ENCODE measurements at regions of chr21 and their contacts with region 1.

Region 1: DNA sequence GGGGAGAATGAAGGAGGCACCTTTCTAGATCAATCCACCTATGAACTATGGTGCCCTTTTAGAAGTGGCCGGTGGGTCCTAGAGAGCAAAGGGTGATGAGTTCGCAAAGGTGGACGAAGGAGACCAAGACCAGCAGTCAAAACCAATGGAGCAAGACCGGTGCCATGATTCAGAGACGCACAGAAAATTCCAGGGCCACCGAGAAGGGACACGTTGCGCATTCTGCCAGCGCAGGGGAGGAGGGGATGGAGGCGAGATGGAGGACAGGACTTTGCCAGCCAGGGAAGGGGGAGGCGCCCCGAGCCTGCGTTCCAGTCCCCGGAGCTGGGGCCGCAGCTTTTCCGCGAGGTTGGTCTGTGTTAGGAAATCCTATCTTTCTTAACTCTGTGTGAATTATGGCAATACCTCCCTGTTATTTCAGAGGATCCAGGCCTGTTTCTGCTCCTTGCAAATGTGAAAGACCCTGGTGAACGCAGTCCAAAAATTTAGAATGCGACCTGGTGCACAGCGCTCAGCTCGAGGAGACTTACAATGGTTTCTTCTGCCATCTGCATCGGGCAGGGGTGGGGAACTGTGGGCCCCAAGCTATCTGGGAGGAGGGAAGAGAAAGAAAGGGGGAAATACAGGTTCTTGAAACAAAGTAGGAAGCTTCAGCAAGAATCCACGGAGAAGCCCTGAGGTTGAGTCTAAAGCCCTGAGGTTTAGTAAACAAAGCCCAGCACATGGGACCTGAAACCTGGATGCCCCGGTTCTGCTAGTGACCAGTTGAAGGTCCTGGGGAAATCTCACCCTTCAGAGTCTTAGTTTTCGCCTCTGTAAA is 129.4 kb downstream of the MRPS6 start:
- DNase-seq: peak in 1 of 2 donors; percentile 38
- ATAC-seq: peak in 4 of 8 donors; percentile 2 to 23 (median 12)
- H3K4me3 ChIP-seq: peak overlapping the region in 2 of 10 donors; percentile 26 to 54
- H3K27ac ChIP-seq: peak overlapping the region in 3 of 10 donors; percentile 9 to 64 (median 36)
- H3K4me1 ChIP-seq: peaks cover 0 to 72% (median 27%) of the 10 kb centered on the region in 9 donors
- H3K27me3 ChIP-seq: no peaks in the 10 kb centered on the region
- CTCF ChIP-seq: no peak

Region 2: DNA sequence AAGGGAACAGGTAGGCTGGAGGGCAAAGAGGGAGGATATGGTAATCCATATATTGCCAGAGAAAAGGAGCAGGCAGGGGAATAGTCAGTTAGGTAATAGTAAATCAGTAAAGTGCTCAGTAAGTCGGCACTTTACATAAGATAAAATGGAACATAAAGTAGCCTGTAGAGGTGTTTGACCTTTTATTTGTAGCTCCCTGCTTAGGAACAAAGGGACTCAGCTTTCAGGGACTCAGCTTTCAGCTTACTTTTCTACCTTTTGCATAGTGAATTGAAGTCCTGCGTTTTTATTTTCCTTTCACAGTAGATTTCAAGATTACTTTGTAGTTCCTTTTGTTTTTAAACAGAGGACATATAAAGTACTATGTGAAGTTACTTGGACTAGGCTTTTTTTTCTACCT is 473.1 kb before region 1 on chr21:
- intact Hi-C with region 1: no loop called
- DNase-seq: no peak
- ATAC-seq: no peak
- H3K4me3 ChIP-seq: no peak overlapping the region
- H3K27ac ChIP-seq: no peak overlapping the region
- H3K4me1 ChIP-seq: peaks cover 0 to 2% (median 0%) of the 10 kb centered on the region in 9 donors
- H3K27me3 ChIP-seq: no peaks in the 10 kb centered on the region
- CTCF ChIP-seq: no peak

Region 3: DNA sequence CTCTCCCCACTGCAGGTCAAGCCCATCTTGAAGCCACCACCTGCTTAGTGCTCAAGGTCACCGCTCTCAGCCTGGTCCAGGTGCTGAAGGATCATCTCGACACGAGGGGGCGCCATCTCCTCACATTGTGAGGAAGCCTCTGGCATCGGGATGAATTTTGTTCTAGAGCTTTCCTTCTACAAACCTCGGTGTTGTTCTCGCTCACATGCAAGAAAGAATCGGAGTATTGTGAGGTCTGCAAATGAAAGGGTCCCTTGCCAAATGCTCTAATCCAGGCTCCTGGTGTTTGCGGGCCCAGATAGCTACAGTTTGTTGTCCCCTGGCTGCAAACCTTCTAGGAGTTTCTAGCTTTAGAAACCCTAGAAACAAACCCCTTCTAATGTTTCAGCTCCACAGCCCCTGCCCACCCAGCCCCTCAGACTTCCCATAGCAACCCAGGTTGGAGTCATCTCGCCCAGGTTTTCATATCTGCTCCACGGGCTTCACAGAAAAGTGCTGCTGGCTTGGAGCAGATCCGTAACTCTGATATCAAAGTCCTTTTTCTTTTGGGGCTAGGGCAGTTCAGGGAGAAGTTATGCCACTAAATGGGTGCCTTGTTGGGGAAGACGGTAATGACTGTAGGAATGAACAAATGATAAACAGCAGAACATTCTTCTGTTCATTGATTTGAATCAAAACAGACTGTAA is 278.5 kb before region 1 on chr21:
- intact Hi-C with region 1: loop called in 6 of 10 experiments (anchors 2 to 5 kb)
- DNase-seq: peak; percentile 89 to 90
- ATAC-seq: peak; percentile 94 to 98 (median 96)
- H3K4me3 ChIP-seq: no peak overlapping the region
- H3K27ac ChIP-seq: no peak overlapping the region
- H3K4me1 ChIP-seq: peaks cover 0 to 10% (median 0%) of the 10 kb centered on the region in 9 donors
- H3K27me3 ChIP-seq: peaks cover 0 to 5% (median 0%) of the 10 kb centered on the region in 7 donors
- CTCF ChIP-seq: peak; percentile 90 to 96 (median 95)

Region 4: DNA sequence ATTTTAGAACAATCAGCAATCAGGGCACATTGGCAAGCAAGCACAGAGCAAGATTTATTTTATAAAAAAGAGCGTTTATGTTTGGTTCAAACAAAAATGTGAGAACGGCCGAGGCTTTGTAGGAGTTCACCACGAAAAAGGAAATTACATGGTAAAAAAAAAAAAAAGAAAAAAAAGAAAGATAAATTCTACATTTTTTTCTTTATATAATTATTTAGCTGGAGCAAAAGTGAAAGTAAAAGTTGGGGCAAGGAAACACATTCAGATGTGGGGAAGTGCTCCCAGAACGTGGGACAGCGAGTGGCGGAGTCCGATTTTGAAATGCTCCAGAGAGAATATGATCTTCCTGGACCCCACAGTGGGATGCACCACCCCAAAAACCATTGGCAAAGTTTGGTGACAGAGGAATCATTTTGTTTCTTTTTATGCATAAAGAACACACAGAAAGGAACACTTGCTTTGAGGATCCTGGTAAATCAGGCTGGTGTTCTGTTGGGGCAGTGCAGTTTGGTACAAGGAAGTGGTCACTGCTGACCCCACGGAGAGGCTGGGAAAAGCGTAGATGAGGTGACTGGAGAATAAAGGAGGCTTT is 270.9 kb before region 1 on chr21:
- intact Hi-C with region 1: loop called in 1 of 10 experiments (anchors 5 kb)
- DNase-seq: no peak
- ATAC-seq: peak in 7 of 8 donors; percentile 44 to 78 (median 64)
- H3K4me3 ChIP-seq: peak overlapping the region in 9 of 10 donors; percentile 16 to 57 (median 45)
- H3K27ac ChIP-seq: peak overlapping the region in 6 of 10 donors; percentile 17 to 90 (median 48)
- H3K4me1 ChIP-seq: peaks cover 0 to 20% (median 8%) of the 10 kb centered on the region in 9 donors
- H3K27me3 ChIP-seq: no peaks in the 10 kb centered on the region
- CTCF ChIP-seq: no peak

Region 5: DNA sequence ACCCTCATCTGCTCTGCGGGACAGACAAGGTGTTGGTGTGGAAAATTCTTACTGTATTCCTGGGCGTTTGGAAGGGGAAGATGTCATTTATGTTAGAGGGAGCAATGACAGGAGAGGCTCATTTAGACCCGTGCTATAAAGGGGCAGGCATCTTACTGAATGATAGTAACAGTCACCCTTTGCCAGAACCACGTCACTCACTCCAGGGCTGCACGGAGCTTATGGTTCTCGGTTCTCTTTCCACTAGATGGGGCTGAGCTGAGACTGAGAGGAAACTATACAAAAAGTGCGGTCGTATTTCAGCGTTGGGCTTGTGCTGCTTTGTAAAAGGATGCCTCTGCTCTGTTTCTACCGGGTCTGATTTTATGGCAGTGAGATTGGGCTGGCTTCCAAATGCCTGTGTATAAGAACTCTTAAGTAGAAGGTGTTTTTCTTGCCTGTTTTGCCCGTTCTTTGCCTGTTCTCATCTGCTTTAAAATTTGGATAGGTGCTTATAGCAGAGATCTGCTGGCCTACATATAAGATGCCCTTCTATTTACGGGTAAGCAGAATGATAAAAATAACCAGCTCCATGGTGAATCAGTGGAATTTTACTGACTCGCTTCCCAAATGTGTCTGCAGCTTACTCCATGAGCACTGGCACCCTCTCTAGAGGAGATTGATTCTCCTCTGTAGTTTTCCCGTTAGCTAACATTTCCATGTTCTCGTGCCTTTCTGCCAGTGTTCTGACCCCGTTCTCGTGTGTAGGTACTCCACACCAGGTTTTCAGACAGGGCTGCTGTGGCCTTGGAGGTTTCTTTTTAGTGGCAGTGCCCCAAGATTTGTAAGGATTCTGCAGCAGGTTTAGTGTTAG is 73.5 kb before region 1 on chr21:
- intact Hi-C with region 1: loop called in 1 of 10 experiments (anchors 5 kb)
- DNase-seq: peak; percentile 41 to 79
- ATAC-seq: peak; percentile 90 to 95 (median 92)
- H3K4me3 ChIP-seq: peak overlapping the region in 7 of 10 donors; percentile 2 to 34 (median 24)
- H3K27ac ChIP-seq: peak overlapping the region; percentile 34 to 82 (median 76)
- H3K4me1 ChIP-seq: peaks cover 3 to 70% (median 62%) of the 10 kb centered on the region in 9 donors
- H3K27me3 ChIP-seq: no peaks in the 10 kb centered on the region
- CTCF ChIP-seq: peak in 8 of 9 donors; percentile 8 to 63 (median 40)

Region 6: DNA sequence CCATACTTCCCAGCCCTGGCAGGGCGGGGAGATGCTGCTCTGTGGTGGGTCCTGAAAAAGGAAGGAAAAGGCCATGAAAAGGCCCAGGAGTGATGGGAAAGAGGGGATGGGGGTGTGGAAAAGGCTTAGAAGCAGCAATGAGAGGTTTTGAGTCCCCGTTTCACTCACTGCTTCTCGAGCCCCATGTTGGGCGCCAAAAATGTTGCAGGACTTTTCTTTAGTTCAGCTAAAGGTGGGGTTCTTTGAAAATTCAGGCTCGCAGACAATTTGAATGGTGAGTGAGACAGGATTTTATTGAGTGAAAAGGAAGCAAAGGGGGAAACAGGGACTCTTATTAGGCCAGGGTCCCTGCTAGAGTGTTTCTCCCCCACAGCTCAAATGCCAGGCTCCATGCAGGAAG is 36.3 kb before region 1 on chr21:
- intact Hi-C with region 1: no loop called
- DNase-seq: no peak
- ATAC-seq: no peak
- H3K4me3 ChIP-seq: no peak overlapping the region
- H3K27ac ChIP-seq: no peak overlapping the region
- H3K4me1 ChIP-seq: no peaks in the 10 kb centered on the region
- H3K27me3 ChIP-seq: no peaks in the 10 kb centered on the region
- CTCF ChIP-seq: no peak

Region 7: GRCh38 chr21:34345091-34345871 is 142.5 kb after region 1 on chr21:
- intact Hi-C with region 1: loop called in 3 of 10 experiments (anchors 5 kb)
- DNase-seq: peak in 1 of 2 donors; percentile 36
- ATAC-seq: peak in 7 of 8 donors; percentile 21 to 62 (median 46)
- H3K4me3 ChIP-seq: peak overlapping the region in 1 of 10 donors; percentile 3
- H3K27ac ChIP-seq: peak overlapping the region in 9 of 10 donors; percentile 2 to 70 (median 47)
- H3K4me1 ChIP-seq: peaks cover 3 to 43% (median 10%) of the 10 kb centered on the region in 9 donors
- H3K27me3 ChIP-seq: no peaks in the 10 kb centered on the region
- CTCF ChIP-seq: no peak

Region 8: DNA sequence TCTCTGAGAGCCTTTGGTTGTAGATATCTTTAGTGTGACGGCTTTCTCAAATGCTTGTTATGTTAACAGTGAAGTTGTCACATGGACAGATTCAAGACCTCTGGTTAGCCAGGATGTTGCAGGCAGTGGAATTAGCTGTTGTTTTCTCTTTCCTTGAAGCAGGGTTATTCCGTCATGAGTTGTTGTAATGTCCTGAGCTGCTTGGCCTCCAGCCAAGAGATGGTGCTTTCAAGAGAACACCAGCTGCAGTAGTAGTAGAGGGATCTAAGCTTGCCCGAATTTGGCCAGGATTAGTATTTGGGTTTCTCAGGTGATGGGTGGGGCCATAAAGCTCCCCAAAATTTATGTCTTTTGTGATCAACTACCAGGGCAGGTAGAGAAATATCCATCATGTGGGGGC is 295.9 kb after region 1 on chr21:
- intact Hi-C with region 1: no loop called
- DNase-seq: no peak
- ATAC-seq: peak in 3 of 8 donors; percentile 45 to 58 (median 48)
- H3K4me3 ChIP-seq: no peak overlapping the region
- H3K27ac ChIP-seq: no peak overlapping the region
- H3K4me1 ChIP-seq: peaks cover 0 to 3% (median 0%) of the 10 kb centered on the region in 9 donors
- H3K27me3 ChIP-seq: no peaks in the 10 kb centered on the region
- CTCF ChIP-seq: no peak